ENCODE measurements at regions of chr13 and their contacts with region 1.

Region 1: DNA sequence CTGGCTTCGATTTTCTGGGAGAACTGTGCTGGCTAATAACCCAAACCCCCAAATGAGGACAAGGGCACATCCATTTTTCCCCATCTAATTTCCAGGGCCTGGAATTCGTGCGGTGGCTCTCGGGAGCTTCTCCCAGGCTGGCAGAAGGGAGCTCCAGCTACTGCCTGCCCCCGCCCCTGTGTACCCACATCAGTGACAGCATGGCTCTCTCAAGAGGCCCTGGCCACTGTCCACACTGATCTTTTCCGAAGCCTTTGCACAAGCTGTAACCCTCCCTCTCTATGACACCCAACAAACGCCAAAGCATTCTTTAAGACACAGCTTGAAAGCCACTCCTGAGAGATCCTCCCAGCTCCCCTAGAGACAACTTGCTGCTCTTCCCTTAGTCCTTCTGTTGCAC is 73.1 kb downstream of the ZIC5 start:
- DNase-seq: no peak
- ATAC-seq: no peak
- H3K4me3 ChIP-seq: no peak overlapping the region
- H3K27ac ChIP-seq: no peak overlapping the region
- H3K4me1 ChIP-seq: no peaks in the 10 kb centered on the region
- H3K27me3 ChIP-seq: peaks cover 0 to 12% of the 10 kb centered on the region in 2 experiments; a peak in 2 of 4 replicates
- CTCF ChIP-seq: no peak
- EP300 ChIP-seq: no peak
- POLR2A ChIP-seq: no peak
- RAD21 ChIP-seq: no peak

Region 2: DNA sequence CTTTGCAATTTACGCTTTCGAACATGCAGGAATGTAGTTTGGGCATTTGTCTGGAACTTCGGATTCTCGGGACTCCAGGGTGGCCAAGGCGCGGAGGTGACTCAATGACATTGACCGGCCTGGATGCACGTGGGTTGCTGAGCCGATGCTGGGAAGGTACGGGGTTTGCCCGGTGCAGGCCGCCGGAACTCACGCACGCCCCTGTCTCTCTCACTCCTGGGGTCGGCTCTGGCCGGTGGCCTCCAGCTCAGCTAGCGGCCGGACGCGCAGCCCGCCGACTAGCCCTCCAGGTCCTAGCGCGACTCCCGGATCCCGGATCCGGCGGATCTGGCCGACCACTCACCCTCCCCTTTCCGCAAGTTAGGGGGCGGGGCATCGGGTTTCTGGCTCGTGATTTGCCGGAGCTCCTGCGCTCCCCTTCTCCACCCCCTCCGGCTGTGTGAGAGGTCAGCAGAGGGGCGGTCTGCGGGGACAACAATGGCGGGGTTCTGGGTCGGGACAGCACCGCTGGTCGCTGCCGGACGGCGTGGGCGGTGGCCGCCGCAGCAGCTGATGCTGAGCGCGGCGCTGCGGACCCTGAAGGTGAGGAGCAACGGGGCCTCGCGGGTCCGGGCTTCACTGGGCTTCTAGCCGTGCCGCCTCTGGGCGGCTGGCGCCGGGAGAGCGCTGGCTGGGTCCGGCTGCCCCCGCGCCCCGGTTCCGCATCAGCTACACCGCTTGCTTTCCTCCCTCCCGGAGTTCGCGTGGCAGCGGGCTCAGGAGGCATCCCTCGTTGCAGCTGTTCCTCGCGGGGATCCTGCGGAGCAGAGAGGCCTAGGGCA is 190.4 kb after region 1 on chr13 and contains the start of gene PCCA:
- CTCF ChIA-PET with region 1: no interaction called
- POLR2A ChIA-PET with region 1: no interaction called
- RAD21 ChIA-PET with region 1: no interaction called
- SMC1A ChIA-PET with region 1: no interaction called
- in situ Hi-C with region 1: no loop called
- intact Hi-C with region 1: no loop called
- DNase-seq: peak; percentile 73
- ATAC-seq: peak; percentile 96
- H3K4me3 ChIP-seq: peak within 1 kb of the TSS; percentile 95
- H3K27ac ChIP-seq: peak within 1 kb of the TSS; percentile 76
- H3K4me1 ChIP-seq: no peaks in the 10 kb centered on the region
- H3K27me3 ChIP-seq: no peaks in the 10 kb centered on the region
- CTCF ChIP-seq: no peak
- EP300 ChIP-seq: 0 out of 4 replicates have a peak, but pooled peaks of 1 of the 2 experiments have one; percentile 33
- POLR2A ChIP-seq: peak; percentile 86
- RAD21 ChIP-seq: no peak
- polyA plus RNA-seq, gene PCCA: 5.9 to 9.3 TPM

Region 3: GRCh38 chr13:100542826-100543156 is 644.4 kb after region 1 on chr13:
- CTCF ChIA-PET with region 1: no interaction called
- POLR2A ChIA-PET with region 1: no interaction called
- RAD21 ChIA-PET with region 1: no interaction called
- SMC1A ChIA-PET with region 1: no interaction called
- in situ Hi-C with region 1: no loop called
- intact Hi-C with region 1: loop called (anchors 1 kb)
- DNase-seq: peak; percentile 43
- ATAC-seq: peak; percentile 90
- H3K4me3 ChIP-seq: no peak overlapping the region
- H3K27ac ChIP-seq: no peak overlapping the region
- H3K4me1 ChIP-seq: peaks cover 6% of the 10 kb centered on the region
- H3K27me3 ChIP-seq: no peaks in the 10 kb centered on the region
- CTCF ChIP-seq: peak; percentile 43 to 65 (median 53); a peak in 5 of 6 replicates
- EP300 ChIP-seq: no peak
- POLR2A ChIP-seq: no peak
- RAD21 ChIP-seq: peak; percentile 48